AG04449 (cell line): ENCODE measurements at regions of chr12 and their contacts with region 1.

Region 1: GRCh38 chr12:57846577-57847319 is at the start of gene CTDSP2:
- DNase-seq: peak; percentile 85
- H3K4me3 ChIP-seq: peak within 1 kb of the TSS; percentile 99
- CTCF ChIP-seq: no peak

Region 2: GRCh38 chr12:57487597-57488401 is 358.9 kb before region 1 on chr12 and contains the start of gene MARS1:
- CTCF ChIA-PET with region 1: no interaction called
- POLR2A ChIA-PET with region 1: no interaction called
- DNase-seq: peak; percentile 73
- H3K4me3 ChIP-seq: peak within 1 kb of the TSS; percentile 99
- CTCF ChIP-seq: no peak

Region 3: GRCh38 chr12:57631893-57632693 is 214.7 kb before region 1 on chr12:
- CTCF ChIA-PET with region 1: no interaction called
- POLR2A ChIA-PET with region 1: no interaction called
- DNase-seq: no peak
- H3K4me3 ChIP-seq: peak overlapping the region; percentile 67
- CTCF ChIP-seq: peak; percentile 3

Region 4: GRCh38 chr12:57815177-57816000 is 31.4 kb before region 1 on chr12:
- CTCF ChIA-PET with region 1: interaction called, 3 read pairs
- POLR2A ChIA-PET with region 1: interaction called, 12 read pairs
- DNase-seq: no peak
- H3K4me3 ChIP-seq: no peak overlapping the region
- CTCF ChIP-seq: no peak

Region 5: GRCh38 chr12:57836442-57837375 is 10.0 kb before region 1 on chr12:
- CTCF ChIA-PET with region 1: interaction called, 8 read pairs
- POLR2A ChIA-PET with region 1: interaction called, 14 read pairs
- DNase-seq: peak; percentile 60
- H3K4me3 ChIP-seq: peak overlapping the region; percentile 40
- CTCF ChIP-seq: no peak

Region 6: GRCh38 chr12:57888409-57889157 is 41.8 kb after region 1 on chr12:
- CTCF ChIA-PET with region 1: interaction called, 484 read pairs
- POLR2A ChIA-PET with region 1: interaction called, 82 read pairs
- DNase-seq: no peak
- H3K4me3 ChIP-seq: peak overlapping the region; percentile 38
- CTCF ChIP-seq: no peak